Gastrocnemius medialis (tissue), 4 donors: ENCODE measurements at regions of chr16 and their contacts with region 1.

Region 1: GRCh38 chr16:49631187-49632041 is 224.5 kb downstream of the ZNF423 start:
- DNase-seq: no peak
- ATAC-seq: no peak
- H3K4me3 ChIP-seq: no peak overlapping the region
- H3K27ac ChIP-seq: no peak overlapping the region
- H3K4me1 ChIP-seq: peaks cover 6 to 16% of the 10 kb centered on the region in 2 donors
- H3K27me3 ChIP-seq: no peaks in the 10 kb centered on the region
- CTCF ChIP-seq: no peak
- POLR2A ChIP-seq: no peak

Region 2: DNA sequence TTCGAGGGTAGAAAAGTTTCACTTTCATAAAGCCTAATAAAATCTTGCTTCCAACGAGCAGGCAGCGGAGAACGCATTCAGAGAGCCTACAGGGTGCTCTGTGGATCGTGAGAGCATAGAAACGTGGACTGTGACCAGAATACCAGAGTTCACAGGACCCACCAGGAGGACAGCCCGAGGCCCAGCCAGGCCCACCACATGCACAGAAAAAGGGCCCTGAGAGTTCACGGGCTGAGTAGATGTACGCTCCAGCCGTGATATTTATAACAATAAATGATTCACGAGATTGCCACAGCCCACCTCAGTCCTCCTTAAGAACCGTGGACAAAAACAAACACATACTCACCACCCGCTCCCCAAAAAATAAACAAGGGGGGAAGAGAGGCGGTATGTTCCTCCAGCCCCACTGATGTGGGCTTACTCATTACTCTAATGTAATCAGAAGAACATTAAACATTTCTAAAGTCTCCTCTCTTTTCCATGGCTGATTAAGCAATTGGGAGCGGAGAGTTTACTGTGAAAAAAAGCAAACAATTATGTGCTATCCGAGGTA is 50.6 kb before region 1 on chr16:
- in situ Hi-C with region 1: no loop called
- intact Hi-C with region 1: loop called (anchors 2 kb)
- DNase-seq: no peak
- ATAC-seq: no peak
- H3K4me3 ChIP-seq: no peak overlapping the region
- H3K27ac ChIP-seq: no peak overlapping the region
- H3K4me1 ChIP-seq: peaks cover 25% of the 10 kb centered on the region in 2 donors
- H3K27me3 ChIP-seq: no peaks in the 10 kb centered on the region
- CTCF ChIP-seq: no peak
- POLR2A ChIP-seq: no peak

Region 3: DNA sequence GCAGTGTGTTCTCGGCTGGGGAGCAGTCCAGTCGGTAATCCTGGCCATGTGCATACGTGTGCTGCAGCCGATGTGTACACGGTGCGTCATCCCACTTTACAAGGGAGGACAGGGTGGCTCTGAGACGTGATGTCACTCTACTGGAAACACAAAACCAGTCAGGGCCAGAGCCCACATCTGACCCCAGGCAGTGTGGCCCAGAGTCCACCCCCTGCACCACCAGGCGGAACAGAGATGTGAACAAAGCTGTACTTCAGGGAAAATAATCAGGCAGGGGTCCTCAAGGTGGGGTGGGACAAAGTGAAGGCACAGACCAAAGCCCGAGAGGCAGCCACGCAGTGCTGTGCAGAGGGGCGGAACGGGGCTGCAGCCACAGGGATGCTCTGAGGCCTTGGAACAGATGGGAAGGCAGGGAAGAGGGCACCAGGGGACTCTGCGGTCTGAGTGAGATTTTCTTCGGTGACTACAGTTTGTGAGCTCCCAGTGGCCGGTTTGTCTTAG is 43.0 kb after region 1 on chr16:
- in situ Hi-C with region 1: no loop called
- intact Hi-C with region 1: no loop called
- DNase-seq: no peak
- ATAC-seq: no peak
- H3K4me3 ChIP-seq: no peak overlapping the region
- H3K27ac ChIP-seq: no peak overlapping the region
- H3K4me1 ChIP-seq: peaks cover 4 to 5% of the 10 kb centered on the region in 2 donors
- H3K27me3 ChIP-seq: no peaks in the 10 kb centered on the region
- CTCF ChIP-seq: no peak
- POLR2A ChIP-seq: no peak